ENCODE measurements at regions of chr4 and their contacts with region 1.

Region 1: DNA sequence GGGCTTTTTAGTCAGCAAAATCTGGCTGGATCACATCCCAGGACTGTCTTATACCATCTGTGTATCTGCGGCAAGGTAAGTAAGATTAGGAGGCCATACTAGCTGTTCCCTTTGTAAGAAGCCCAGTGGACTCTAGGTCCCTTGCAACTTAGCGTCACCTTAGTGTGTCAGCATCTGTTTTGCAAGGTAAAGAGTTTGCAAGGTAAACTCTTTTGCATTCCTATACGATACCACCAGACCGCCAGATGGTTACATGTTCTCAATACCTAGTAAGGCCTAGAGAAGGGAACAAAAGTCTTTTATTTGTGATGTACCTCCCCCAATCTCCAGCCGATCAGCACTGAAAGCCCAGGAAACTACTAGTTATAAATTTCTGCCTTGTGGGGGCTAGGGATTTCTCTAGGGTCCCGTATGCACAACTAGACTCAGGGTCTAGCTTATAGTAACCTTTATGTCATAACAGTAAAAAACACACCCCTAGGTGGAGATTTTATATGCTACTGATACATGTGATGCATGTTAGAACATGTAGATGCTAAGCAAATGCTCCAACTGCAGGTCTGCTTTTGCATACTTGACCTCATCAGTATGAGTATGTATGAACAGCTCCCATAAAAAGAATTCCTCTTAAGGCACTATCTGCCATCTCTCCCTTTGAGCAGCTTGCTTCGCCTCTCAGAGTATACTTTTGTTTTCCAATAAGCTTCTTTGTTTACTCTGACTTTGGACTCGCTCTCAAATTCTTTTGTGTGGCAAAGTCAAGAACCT is 78.4 kb downstream of the KCNIP4 start:
- DNase-seq: peak; percentile 50
- H3K4me3 ChIP-seq: no peak overlapping the region
- H3K27ac ChIP-seq: no peak overlapping the region
- H3K4me1 ChIP-seq: no peaks in the 10 kb centered on the region
- H3K27me3 ChIP-seq: no peaks in the 10 kb centered on the region
- CTCF ChIP-seq: no peak

Region 2: DNA sequence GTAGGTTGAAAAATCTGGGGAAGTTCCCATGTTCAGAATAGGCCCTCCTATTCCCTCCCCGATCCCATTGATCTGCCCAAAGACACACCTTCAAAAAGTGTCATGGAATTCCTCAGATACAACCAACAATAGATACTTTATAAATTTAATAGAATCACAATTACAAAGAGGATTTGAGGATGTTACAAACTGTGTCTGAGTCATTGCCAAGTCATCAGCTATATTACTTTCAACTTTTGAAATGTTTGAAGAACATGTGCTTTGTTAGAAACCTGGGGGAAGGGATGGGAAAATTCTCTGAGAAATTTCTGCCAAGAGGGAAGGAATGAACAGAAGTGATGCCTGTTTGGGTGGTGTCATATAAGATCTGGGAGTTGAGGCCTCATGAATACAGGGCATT is 31.7 kb after region 1 on chr4:
- CTCF ChIA-PET with region 1: no interaction called
- dilution Hi-C with region 1: no loop called
- in situ Hi-C with region 1: no loop called
- intact Hi-C with region 1: loop called (anchors 1 kb)
- DNase-seq: peak; percentile 93
- H3K4me3 ChIP-seq: no peak overlapping the region
- H3K27ac ChIP-seq: peak overlapping the region; percentile 86
- H3K4me1 ChIP-seq: peaks cover 18% of the 10 kb centered on the region
- H3K27me3 ChIP-seq: no peaks in the 10 kb centered on the region
- CTCF ChIP-seq: no peak

Measured in mammary epithelial cell (primary cell).